ENCODE measurements at regions of chr6 and their contacts with region 1.

Region 1: GRCh38 chr6:30489081-30490025 is at the start of gene HLA-E:
- DNase-seq: peak; percentile 91
- ATAC-seq: peak; percentile 100
- H3K4me3 ChIP-seq: peak within 1 kb of the TSS; percentile 55 to 91 (median 76)
- H3K27ac ChIP-seq: peak within 1 kb of the TSS; percentile 77 to 95 (median 86)
- H3K4me1 ChIP-seq: peaks cover 0 to 3% of the 10 kb centered on the region in 2 donors
- H3K27me3 ChIP-seq: peaks cover 5 to 10% (median 9%) of the 10 kb centered on the region in 3 donors
- CTCF ChIP-seq: no peak
- POLR2A ChIP-seq: peak; percentile 83 to 92
- total RNA-seq, gene HLA-E: 135 to 248 (median 157) TPM

Region 2: GRCh38 chr6:30311101-30311500 is 178.3 kb before region 1 on chr6:
- in situ Hi-C with region 1: no loop called
- intact Hi-C with region 1: no loop called
- DNase-seq: no peak
- ATAC-seq: no peak
- H3K4me3 ChIP-seq: no peak overlapping the region
- H3K27ac ChIP-seq: no peak overlapping the region
- H3K4me1 ChIP-seq: peaks cover 8 to 12% of the 10 kb centered on the region in 2 donors
- H3K27me3 ChIP-seq: no peaks in the 10 kb centered on the region
- CTCF ChIP-seq: no peak
- POLR2A ChIP-seq: no peak

Region 3: GRCh38 chr6:30453508-30454116 is 35.7 kb before region 1 on chr6:
- in situ Hi-C with region 1: no loop called
- intact Hi-C with region 1: loop called (anchors 1 kb)
- DNase-seq: peak in 1 of 2 donors; percentile 46
- ATAC-seq: peak; percentile 58 to 69
- H3K4me3 ChIP-seq: no peak overlapping the region
- H3K27ac ChIP-seq: no peak overlapping the region
- H3K4me1 ChIP-seq: peaks cover 4 to 9% of the 10 kb centered on the region in 2 donors
- H3K27me3 ChIP-seq: peaks cover 35 to 88% (median 85%) of the 10 kb centered on the region in 3 donors
- CTCF ChIP-seq: peak; percentile 44 to 57 (median 52)
- POLR2A ChIP-seq: no peak

Region 4: GRCh38 chr6:30463651-30464618 is 25.4 kb before region 1 on chr6:
- in situ Hi-C with region 1: no loop called
- intact Hi-C with region 1: no loop called
- DNase-seq: no peak
- ATAC-seq: peak in 1 of 2 donors; percentile 28
- H3K4me3 ChIP-seq: peak overlapping the region in 3 of 4 donors; percentile 9 to 35 (median 16)
- H3K27ac ChIP-seq: no peak overlapping the region
- H3K4me1 ChIP-seq: peaks cover 14 to 21% of the 10 kb centered on the region in 2 donors
- H3K27me3 ChIP-seq: peaks cover 79 to 96% (median 85%) of the 10 kb centered on the region in 3 donors
- CTCF ChIP-seq: no peak
- POLR2A ChIP-seq: no peak

Region 5: DNA sequence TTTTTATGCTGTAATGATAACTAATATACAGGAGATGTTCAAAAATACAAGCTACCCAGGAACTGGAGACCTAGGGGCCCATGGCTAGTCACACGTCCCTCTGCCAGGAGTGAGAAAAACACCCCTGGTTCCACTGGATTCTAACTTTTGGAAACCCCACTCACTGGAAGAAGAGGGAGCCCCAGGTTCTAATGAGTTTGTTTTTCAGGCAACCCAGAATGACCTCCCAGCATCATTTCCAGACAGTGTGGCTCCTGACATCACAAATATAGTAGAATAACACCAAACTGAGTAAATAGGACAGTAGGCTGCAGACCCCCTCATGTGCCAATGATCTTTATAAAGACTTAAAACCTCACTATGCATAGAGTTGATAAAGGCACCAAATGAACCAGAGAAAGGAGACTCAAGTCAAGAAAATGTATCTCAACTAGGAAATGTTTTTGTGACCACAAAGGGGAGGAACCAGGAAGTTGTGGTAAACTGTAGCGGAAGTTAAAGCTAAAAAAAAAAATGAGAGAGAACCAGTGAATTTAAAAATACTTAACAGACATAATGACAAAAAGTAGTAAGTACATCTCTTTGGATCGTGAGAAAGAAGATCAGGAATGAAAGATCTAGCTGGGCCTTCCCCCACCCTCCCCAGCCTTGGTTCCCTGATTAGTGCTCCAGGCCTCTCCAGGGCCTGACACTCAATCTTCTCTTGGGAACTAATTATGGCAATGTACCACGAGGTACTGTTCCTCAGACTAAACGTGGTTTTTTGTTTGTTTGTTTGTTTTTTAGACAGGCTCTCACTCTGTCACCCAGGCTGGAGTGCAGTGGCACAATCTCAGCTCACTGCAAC is 19.8 kb after region 1 on chr6:
- in situ Hi-C with region 1: no loop called
- intact Hi-C with region 1: no loop called
- DNase-seq: no peak
- ATAC-seq: no peak
- H3K4me3 ChIP-seq: no peak overlapping the region
- H3K27ac ChIP-seq: peak overlapping the region in 2 of 4 donors; percentile 28
- H3K4me1 ChIP-seq: no peaks in the 10 kb centered on the region
- H3K27me3 ChIP-seq: no peaks in the 10 kb centered on the region
- CTCF ChIP-seq: no peak
- POLR2A ChIP-seq: no peak

Region 6: DNA sequence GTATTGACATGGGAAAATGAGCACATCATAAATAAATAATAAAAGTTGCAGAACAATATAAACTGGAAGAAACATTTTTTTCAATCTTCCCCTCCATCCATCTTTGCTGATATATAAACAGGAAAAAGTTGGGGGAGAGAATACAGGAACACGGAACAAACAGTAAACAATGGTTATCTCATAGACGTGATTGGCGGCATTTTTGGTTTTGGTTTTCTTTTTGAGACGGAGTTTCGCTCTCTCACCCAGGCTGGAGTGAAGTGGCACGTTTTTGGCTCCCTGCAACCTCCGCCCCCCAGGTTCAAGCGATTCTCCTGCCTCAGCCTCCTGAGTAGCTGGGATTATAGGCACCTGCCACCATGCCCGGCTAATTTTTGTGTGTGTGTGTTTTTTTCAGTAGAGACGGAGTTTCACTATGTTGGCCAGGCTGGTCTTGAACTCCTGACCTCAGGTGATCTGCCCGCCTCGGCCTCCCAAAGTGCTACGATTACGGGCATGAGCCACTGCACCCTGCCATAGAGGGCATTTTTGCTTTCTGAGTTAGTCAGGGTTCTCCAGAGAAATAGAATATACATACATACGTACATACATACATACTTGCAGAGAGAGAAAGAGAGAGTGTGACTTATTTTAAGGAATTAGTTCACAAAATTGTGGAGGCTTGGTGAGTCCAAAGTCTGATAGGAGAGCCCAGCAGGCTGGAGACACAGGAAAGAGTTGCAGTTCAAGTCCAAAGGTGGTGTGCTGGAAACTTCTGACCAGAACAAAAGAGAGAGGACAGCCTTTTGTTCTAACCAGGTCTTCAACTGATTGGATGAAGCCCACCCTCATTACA is 44.3 kb after region 1 on chr6:
- in situ Hi-C with region 1: loop called in 2 of 4 experiments (anchors 5 to 10 kb)
- intact Hi-C with region 1: loop called (anchors 2 kb)
- DNase-seq: no peak
- ATAC-seq: no peak
- H3K4me3 ChIP-seq: no peak overlapping the region
- H3K27ac ChIP-seq: peak overlapping the region in 2 of 4 donors; percentile 48 to 52
- H3K4me1 ChIP-seq: no peaks in the 10 kb centered on the region
- H3K27me3 ChIP-seq: no peaks in the 10 kb centered on the region
- CTCF ChIP-seq: no peak
- POLR2A ChIP-seq: no peak

Region 7: GRCh38 chr6:31676322-31676903 is 1187.1 kb after region 1 on chr6:
- in situ Hi-C with region 1: no loop called
- intact Hi-C with region 1: no loop called
- DNase-seq: no peak
- ATAC-seq: no peak
- H3K4me3 ChIP-seq: no peak overlapping the region
- H3K27ac ChIP-seq: no peak overlapping the region
- H3K4me1 ChIP-seq: peaks cover 11% of the 10 kb centered on the region in 2 donors
- H3K27me3 ChIP-seq: no peaks in the 10 kb centered on the region
- CTCF ChIP-seq: no peak
- POLR2A ChIP-seq: no peak